ENCODE measurements at regions of chr1 and their contacts with region 1.

Region 1: GRCh38 chr1:190138266-190138665 is 339.4 kb downstream of the BRINP3 start:
- DNase-seq: peak; percentile 24
- ATAC-seq: no peak
- H3K4me3 ChIP-seq: no peak overlapping the region
- H3K27ac ChIP-seq: no peak overlapping the region
- H3K4me1 ChIP-seq: no peaks in the 10 kb centered on the region
- H3K27me3 ChIP-seq: no peaks in the 10 kb centered on the region
- CTCF ChIP-seq: no peak
- POLR2A ChIP-seq: no peak
- RAD21 ChIP-seq: no peak

Region 2: GRCh38 chr1:190289897-190290296 is 151.6 kb after region 1 on chr1:
- CTCF ChIA-PET with region 1: no interaction called
- POLR2A ChIA-PET with region 1: no interaction called
- dilution Hi-C with region 1: no loop called
- in situ Hi-C with region 1: no loop called
- intact Hi-C with region 1: loop called (anchors 10 kb)
- DNase-seq: no peak
- ATAC-seq: no peak
- H3K4me3 ChIP-seq: no peak overlapping the region
- H3K27ac ChIP-seq: no peak overlapping the region
- H3K4me1 ChIP-seq: no peaks in the 10 kb centered on the region
- H3K27me3 ChIP-seq: no peaks in the 10 kb centered on the region
- CTCF ChIP-seq: no peak
- POLR2A ChIP-seq: no peak
- RAD21 ChIP-seq: no peak